ENCODE measurements at regions of chr2 and their contacts with region 1.

Region 1: DNA sequence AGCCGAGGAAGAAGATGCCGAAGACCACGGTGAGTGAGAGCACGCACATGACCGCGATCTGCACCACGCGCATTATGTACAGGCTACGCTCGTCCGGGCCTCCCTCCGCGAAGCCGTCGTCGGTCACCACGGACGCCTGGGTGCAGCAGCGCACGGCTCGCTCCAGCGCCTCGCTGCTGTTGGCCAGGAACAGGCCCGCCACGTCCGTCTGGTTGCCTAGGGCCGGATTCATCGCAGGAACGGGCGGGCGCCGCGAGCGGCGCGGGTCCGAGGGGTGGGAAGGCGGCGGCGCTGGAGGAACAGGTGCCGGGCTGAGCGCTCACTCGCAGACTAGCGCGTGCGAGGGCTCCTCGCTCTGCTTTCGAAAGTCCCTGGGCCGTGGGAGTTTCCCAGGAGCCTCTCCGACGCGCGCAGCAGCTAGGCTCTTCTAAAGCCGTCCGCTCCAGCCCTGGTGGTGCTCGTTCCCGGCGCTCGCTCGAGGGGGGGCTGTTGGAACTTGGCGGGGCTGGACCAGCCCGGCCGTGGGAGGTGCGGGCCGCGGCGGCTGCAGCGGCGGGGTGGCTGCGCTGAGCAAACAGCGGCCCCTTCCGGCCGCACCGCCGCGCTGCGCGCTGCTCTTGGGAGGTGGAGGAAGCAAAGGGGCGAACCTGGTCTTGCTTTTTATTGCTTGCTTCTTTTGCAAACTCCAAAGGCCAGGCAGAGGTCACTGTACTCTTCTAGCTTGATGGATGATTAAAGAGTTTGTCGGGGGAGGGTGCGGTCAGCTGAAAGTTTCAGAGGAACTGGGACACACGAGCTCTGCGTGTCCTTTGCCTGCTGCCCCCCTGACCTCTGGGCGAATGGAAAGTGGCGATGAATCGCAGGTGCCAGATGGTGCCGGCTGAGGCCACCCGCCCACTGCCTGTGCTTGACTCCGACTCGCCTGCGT is at the start of gene RPRM:
- DNase-seq: peak; percentile 80 to 94
- ATAC-seq: peak; percentile 91
- H3K4me3 ChIP-seq: peak within 1 kb of the TSS; percentile 22 to 24
- H3K27ac ChIP-seq: no peak within 1 kb of the TSS
- H3K4me1 ChIP-seq: peaks cover 0 to 2% of the 10 kb centered on the region in 2 donors
- H3K27me3 ChIP-seq: no peaks in the 10 kb centered on the region
- total RNA-seq, gene RPRM: 0.23 to 1.1 TPM

Region 2: GRCh38 chr2:153163058-153163457 is 315.5 kb before region 1 on chr2:
- intact Hi-C with region 1: loop called in 1 of 2 experiments (anchors 10 kb)
- DNase-seq: no peak
- ATAC-seq: no peak
- H3K4me3 ChIP-seq: no peak overlapping the region
- H3K27ac ChIP-seq: no peak overlapping the region
- H3K4me1 ChIP-seq: no peaks in the 10 kb centered on the region
- H3K27me3 ChIP-seq: no peaks in the 10 kb centered on the region

Region 3: GRCh38 chr2:153519257-153519875 is 40.8 kb after region 1 on chr2:
- intact Hi-C with region 1: no loop called
- DNase-seq: peak; percentile 51 to 80
- ATAC-seq: no peak
- H3K4me3 ChIP-seq: no peak overlapping the region
- H3K27ac ChIP-seq: no peak overlapping the region
- H3K4me1 ChIP-seq: no peaks in the 10 kb centered on the region
- H3K27me3 ChIP-seq: no peaks in the 10 kb centered on the region

Measured in aorta (tissue), 5 donors.